ENCODE measurements at regions of chr7 and their contacts with region 1.

Region 1: DNA sequence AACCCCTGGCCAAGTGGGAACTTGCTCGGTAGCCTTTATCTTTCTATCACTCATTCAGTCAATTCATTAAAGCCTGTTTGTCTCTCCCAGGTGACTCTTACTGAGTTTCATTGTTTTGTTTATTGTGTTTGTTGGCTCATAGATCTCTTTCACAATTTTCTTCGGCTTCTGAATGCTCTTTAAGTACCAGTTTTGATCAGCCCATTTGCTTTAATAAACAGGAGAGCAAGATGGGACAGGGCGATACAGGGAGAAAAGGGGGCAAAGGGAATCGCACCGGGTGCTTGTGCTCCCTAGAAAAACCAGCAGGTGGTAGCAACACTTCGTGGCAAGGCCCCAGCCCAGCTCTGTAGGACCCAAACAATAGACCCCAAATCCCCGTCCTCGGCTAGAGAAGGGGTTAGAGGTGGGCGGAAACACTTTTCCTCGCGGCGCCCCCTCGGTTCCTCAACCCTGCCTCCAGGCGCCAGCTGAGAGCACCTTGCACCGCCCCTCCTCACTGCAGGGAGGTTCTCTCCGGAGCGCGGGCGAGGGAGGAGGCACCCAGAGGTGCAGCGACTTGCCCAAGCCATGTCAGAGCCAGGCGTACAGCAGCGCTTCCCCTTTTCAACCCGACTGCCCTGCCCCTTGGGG is 1.0 kb upstream of the EPHB6 start:
- DNase-seq: peak; percentile 77
- ATAC-seq: peak; percentile 81
- H3K4me3 Mint-ChIP-seq: peak overlapping the region; percentile 95
- H3K27ac Mint-ChIP-seq: peak overlapping the region; percentile 82
- H3K4me1 Mint-ChIP-seq: peaks cover 6% of the 10 kb centered on the region
- H3K27me3 Mint-ChIP-seq: no peaks in the 10 kb centered on the region
- CTCF ChIP-seq: peak; percentile 92

Region 2: DNA sequence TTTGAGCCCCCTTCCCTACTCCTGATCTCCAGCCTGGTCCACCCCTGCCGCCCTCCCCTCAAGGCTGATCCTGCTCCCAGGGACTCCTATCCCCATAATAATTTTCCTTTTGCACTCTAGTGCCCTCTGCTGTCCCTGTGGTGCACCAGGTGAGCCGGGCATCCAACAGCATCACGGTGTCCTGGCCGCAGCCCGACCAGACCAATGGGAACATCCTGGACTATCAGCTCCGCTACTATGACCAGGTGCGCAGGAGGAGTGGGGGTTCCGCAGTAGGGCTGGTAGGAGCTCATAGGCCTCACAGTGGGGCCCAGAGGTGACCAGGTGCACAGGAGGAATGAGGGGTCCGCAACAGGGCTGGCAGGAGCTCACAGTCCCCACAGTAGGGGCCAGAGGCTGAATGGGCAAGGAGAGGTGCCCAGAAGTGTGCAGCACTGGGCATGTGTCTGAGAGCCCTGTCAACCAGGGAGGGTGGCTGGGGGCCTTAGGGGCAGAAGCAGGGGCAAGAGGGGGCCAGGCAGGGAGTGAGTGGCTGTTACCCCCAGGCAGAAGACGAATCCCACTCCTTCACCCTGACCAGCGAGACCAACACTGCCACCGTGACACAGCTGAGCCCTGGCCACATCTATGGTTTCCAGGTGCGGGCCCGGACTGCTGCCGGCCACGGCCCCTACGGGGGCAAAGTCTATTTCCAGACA is 12.7 kb after region 1 on chr7:
- CTCF ChIA-PET with region 1: interaction called, 11 read pairs
- POLR2A ChIA-PET with region 1: no interaction called
- intact Hi-C with region 1: no loop called
- DNase-seq: peak; percentile 20
- ATAC-seq: peak; percentile 39
- H3K4me3 Mint-ChIP-seq: no peak overlapping the region
- H3K27ac Mint-ChIP-seq: no peak overlapping the region
- H3K4me1 Mint-ChIP-seq: no peaks in the 10 kb centered on the region
- H3K27me3 Mint-ChIP-seq: no peaks in the 10 kb centered on the region
- CTCF ChIP-seq: peak; percentile 49

Region 3: DNA sequence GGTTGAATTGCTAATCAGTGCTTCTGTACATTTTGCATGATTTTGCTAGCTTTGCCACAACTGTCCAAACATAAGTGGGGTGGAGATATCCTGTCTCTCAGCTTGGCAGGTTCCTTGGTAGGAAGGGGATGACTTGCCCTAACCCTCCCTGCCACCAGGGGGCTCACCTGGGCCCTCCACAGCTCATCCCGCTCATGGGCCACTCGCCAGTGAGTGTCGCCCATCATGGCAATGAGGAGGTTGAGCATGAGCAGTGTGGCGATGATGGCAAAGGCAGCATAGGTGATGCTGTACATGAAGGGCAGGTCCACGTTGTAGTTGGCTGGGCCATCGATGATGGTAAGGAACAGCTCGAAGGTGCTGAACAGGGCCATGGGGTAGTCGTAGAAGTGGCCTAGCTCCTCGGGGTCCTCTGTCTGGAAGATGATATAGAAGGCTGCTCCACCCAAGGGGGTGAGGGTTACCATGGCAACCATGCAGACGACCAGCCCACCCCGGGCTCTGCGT is 19.5 kb after region 1 on chr7:
- CTCF ChIA-PET with region 1: interaction called, 12 read pairs
- POLR2A ChIA-PET with region 1: no interaction called
- intact Hi-C with region 1: no loop called
- DNase-seq: peak; percentile 58
- ATAC-seq: peak; percentile 91
- H3K4me3 Mint-ChIP-seq: no peak overlapping the region
- H3K27ac Mint-ChIP-seq: no peak overlapping the region
- H3K4me1 Mint-ChIP-seq: no peaks in the 10 kb centered on the region
- H3K27me3 Mint-ChIP-seq: no peaks in the 10 kb centered on the region
- CTCF ChIP-seq: peak; percentile 69

Region 4: GRCh38 chr7:142880876-142881505 is 27.1 kb after region 1 on chr7:
- CTCF ChIA-PET with region 1: interaction called, 11 read pairs
- POLR2A ChIA-PET with region 1: no interaction called
- intact Hi-C with region 1: no loop called
- DNase-seq: peak; percentile 67
- ATAC-seq: peak; percentile 94
- H3K4me3 Mint-ChIP-seq: no peak overlapping the region
- H3K27ac Mint-ChIP-seq: no peak overlapping the region
- H3K4me1 Mint-ChIP-seq: no peaks in the 10 kb centered on the region
- H3K27me3 Mint-ChIP-seq: no peaks in the 10 kb centered on the region
- CTCF ChIP-seq: peak; percentile 90

Region 5: GRCh38 chr7:142898377-142899170 is 44.7 kb after region 1 on chr7:
- CTCF ChIA-PET with region 1: no interaction called
- POLR2A ChIA-PET with region 1: no interaction called
- intact Hi-C with region 1: no loop called
- DNase-seq: no peak
- ATAC-seq: no peak
- H3K4me3 Mint-ChIP-seq: no peak overlapping the region
- H3K27ac Mint-ChIP-seq: no peak overlapping the region
- H3K4me1 Mint-ChIP-seq: no peaks in the 10 kb centered on the region
- H3K27me3 Mint-ChIP-seq: peaks cover 1% of the 10 kb centered on the region
- CTCF ChIP-seq: no peak

Region 6: GRCh38 chr7:142916508-142916907 is 62.7 kb after region 1 on chr7:
- CTCF ChIA-PET with region 1: no interaction called
- POLR2A ChIA-PET with region 1: no interaction called
- intact Hi-C with region 1: no loop called
- DNase-seq: no peak
- ATAC-seq: no peak
- H3K4me3 Mint-ChIP-seq: no peak overlapping the region
- H3K27ac Mint-ChIP-seq: no peak overlapping the region
- H3K4me1 Mint-ChIP-seq: no peaks in the 10 kb centered on the region
- H3K27me3 Mint-ChIP-seq: peaks cover 3% of the 10 kb centered on the region
- CTCF ChIP-seq: no peak